CD4-positive, alpha-beta T cell (primary cell): ENCODE measurements at regions of chr19 and their contacts with region 1.

Region 1: DNA sequence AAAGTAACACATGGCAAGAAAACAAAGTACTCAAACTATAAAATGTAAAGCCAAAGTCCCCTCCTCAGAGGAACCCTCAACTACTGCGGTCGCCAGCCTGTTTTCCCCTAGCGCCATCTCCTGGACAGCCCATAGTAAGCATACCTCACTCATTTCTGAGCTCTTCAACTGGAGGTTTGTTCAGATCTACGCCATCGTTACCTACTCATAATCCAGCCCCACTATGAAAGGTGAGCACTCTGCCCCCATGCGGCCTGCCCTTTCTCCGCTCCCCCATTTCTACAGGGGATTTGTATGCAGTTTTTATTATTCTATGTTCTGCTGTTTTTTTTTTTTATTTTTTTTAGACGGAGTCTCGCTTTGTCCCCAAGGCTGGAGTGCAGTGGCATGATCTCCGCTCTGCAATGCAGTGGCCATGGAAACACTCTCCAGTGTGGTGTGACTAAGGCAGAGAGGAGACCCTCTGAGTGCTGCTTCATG is 26.2 kb downstream of the OPA3 start:
- DNase-seq: peak; percentile 46 to 89 (median 62)
- ATAC-seq: peak; percentile 98
- H3K4me3 ChIP-seq: no peak overlapping the region
- H3K4me3 Mint-ChIP-seq: no peak overlapping the region
- H3K27ac ChIP-seq: no peak overlapping the region
- H3K27ac Mint-ChIP-seq: peak overlapping the region; percentile 4
- H3K4me1 ChIP-seq: peaks cover 30% of the 10 kb centered on the region
- H3K4me1 Mint-ChIP-seq: peaks cover 41% of the 10 kb centered on the region
- H3K27me3 ChIP-seq: no peaks in the 10 kb centered on the region
- H3K27me3 Mint-ChIP-seq: no peaks in the 10 kb centered on the region
- CTCF ChIP-seq: peak; percentile 62

Region 2: DNA sequence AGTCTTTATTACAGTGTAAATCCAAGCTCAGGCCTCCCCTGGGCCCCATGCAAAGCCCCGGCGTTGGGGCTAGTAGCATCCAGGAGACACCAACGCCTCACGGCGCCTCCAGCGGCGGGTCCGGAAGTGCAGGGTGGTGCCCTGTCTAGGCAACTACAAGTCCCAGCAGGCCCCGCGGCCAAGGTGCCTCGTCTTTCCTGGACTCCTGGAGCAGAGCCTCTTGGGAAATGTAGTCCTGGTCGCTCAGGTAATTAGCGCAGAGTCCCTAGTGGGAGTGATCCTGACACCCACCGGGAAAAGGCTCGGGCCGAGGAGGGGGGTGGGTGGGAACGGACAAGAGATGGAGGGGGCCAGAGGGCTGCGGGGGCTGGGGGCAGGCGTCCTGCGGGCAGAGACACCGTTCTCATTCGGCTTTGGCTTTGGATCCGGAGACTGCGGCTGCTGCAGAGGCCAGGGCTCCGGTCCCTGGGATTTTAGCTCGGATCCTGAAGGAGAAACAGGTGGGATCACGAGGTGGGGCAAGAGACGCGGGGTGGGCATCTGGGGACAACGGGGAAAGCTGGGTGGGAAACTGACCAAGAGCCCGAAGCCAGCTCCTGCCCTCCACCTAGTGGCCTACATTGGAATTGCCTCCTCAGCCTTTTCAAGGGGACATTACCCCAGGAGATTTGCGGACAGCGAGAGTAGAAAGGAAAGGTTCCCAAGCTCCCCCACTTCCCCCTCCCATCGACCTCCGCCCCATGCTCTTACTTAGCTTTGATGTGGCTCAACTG is 72.9 kb before region 1 on chr19:
- CTCF ChIA-PET with region 1: interaction called, 10 read pairs
- POLR2A ChIA-PET with region 1: no interaction called
- intact Hi-C with region 1: no loop called
- DNase-seq: peak; percentile 95 to 98 (median 97)
- ATAC-seq: peak; percentile 99
- H3K4me3 ChIP-seq: peak overlapping the region; percentile 69
- H3K4me3 Mint-ChIP-seq: peak overlapping the region; percentile 98
- H3K27ac ChIP-seq: no peak overlapping the region
- H3K27ac Mint-ChIP-seq: peak overlapping the region; percentile 47
- H3K4me1 ChIP-seq: peaks cover 14% of the 10 kb centered on the region
- H3K4me1 Mint-ChIP-seq: peaks cover 6% of the 10 kb centered on the region
- H3K27me3 ChIP-seq: no peaks in the 10 kb centered on the region
- H3K27me3 Mint-ChIP-seq: peaks cover 7% of the 10 kb centered on the region
- CTCF ChIP-seq: peak; percentile 86

Region 3: GRCh38 chr19:45506246-45506990 is 52.0 kb before region 1 on chr19:
- CTCF ChIA-PET with region 1: interaction called, 10 read pairs
- POLR2A ChIA-PET with region 1: no interaction called
- intact Hi-C with region 1: loop called (anchors 1 to 5 kb)
- DNase-seq: peak; percentile 95 to 100 (median 97)
- ATAC-seq: peak; percentile 76
- H3K4me3 ChIP-seq: peak overlapping the region; percentile 89
- H3K4me3 Mint-ChIP-seq: peak overlapping the region; percentile 99
- H3K27ac ChIP-seq: peak overlapping the region; percentile 94 to 95
- H3K27ac Mint-ChIP-seq: peak overlapping the region; percentile 99
- H3K4me1 ChIP-seq: peaks cover 47% of the 10 kb centered on the region
- H3K4me1 Mint-ChIP-seq: peaks cover 47% of the 10 kb centered on the region
- H3K27me3 ChIP-seq: no peaks in the 10 kb centered on the region
- H3K27me3 Mint-ChIP-seq: no peaks in the 10 kb centered on the region
- CTCF ChIP-seq: peak; percentile 63

Region 4: GRCh38 chr19:45547976-45548609 is 10.3 kb before region 1 on chr19:
- CTCF ChIA-PET with region 1: interaction called, 11 read pairs
- POLR2A ChIA-PET with region 1: no interaction called
- intact Hi-C with region 1: no loop called
- DNase-seq: no peak
- ATAC-seq: no peak
- H3K4me3 ChIP-seq: no peak overlapping the region
- H3K4me3 Mint-ChIP-seq: no peak overlapping the region
- H3K27ac ChIP-seq: no peak overlapping the region
- H3K27ac Mint-ChIP-seq: no peak overlapping the region
- H3K4me1 ChIP-seq: peaks cover 2% of the 10 kb centered on the region
- H3K4me1 Mint-ChIP-seq: no peaks in the 10 kb centered on the region
- H3K27me3 ChIP-seq: no peaks in the 10 kb centered on the region
- H3K27me3 Mint-ChIP-seq: no peaks in the 10 kb centered on the region
- CTCF ChIP-seq: no peak

Region 5: DNA sequence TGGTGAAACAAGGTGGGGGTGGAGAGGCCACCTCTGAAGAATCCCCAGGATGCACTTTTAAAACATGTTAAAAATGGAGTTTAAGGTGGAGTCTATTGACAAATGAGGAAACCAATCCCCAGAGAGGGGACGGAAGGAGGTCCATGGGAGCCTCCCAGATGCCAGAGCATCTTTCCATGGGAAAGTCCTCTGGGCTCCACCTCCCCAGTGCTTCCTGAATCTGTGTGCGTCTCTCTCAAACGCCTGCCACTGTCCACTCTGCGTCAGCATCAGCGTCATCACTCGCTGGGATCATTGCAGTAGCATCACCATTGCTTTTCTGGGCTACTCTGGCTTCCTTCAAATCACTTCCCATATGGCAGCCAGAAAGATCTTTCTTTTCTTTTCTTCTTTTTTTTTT is 37.4 kb after region 1 on chr19:
- CTCF ChIA-PET with region 1: no interaction called
- POLR2A ChIA-PET with region 1: no interaction called
- intact Hi-C with region 1: no loop called
- DNase-seq: no peak
- ATAC-seq: no peak
- H3K4me3 ChIP-seq: no peak overlapping the region
- H3K4me3 Mint-ChIP-seq: no peak overlapping the region
- H3K27ac ChIP-seq: no peak overlapping the region
- H3K27ac Mint-ChIP-seq: no peak overlapping the region
- H3K4me1 ChIP-seq: peaks cover 19% of the 10 kb centered on the region
- H3K4me1 Mint-ChIP-seq: peaks cover 22% of the 10 kb centered on the region
- H3K27me3 ChIP-seq: peaks cover 50 to 58% of the 10 kb centered on the region in 2 experiments
- H3K27me3 Mint-ChIP-seq: peaks cover 79% of the 10 kb centered on the region
- CTCF ChIP-seq: no peak